ENCODE measurements at regions of chr17 and their contacts with region 1.

Region 1: DNA sequence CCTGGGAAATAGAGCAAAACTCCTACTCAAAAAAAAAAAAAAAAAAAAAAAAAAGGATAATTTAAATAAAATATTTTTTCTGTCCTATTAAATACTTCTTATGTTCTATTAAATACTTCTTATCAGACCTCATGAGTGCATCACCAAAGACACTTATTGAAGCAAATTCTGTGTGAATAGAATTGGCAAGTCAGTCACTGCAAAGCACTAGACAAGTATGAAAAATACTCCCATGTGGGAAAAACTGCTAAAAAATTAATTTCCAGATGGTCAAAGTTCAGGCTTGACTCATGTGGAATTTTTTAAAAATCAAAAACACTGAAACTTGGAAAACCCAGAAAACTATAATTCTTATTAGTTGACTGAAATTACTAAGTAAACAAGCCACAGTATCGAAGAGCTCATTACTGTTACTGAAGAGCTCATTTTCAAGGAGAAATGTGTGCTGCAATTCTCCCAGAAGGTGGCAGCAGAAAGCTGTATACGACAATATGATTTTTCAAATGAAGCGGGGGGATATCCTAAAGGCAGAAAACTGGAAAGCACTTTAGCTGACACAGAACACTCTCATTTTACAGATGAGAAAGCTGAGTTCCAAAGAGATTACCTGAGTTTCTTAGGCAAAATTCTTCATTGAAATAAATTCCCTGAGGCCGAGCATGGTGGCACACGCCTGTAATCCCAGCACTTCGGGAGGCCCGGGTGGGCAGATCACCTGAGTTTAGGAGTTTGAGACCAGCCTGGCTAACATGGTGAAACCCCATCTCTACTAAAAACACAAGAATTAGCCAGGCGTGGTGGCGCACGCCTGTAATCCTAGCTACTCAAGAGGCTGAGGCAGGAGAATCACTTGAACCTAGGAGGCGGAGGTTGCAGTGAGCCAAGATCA is 15.9 kb upstream of the FBXO47 start:
- DNase-seq: peak; percentile 75
- ATAC-seq: peak; percentile 60
- H3K4me3 ChIP-seq: no peak overlapping the region
- H3K27ac ChIP-seq: no peak overlapping the region
- H3K4me1 ChIP-seq: peaks cover 9% of the 10 kb centered on the region
- H3K27me3 ChIP-seq: no peaks in the 10 kb centered on the region
- CTCF ChIP-seq: peak; percentile 86
- POLR2A ChIP-seq: no peak
- RAD21 ChIP-seq: peak; percentile 85

Region 2: GRCh38 chr17:38351412-38352222 is 631.5 kb before region 1 on chr17 and contains the start of gene SOCS7:
- CTCF ChIA-PET with region 1: no interaction called
- POLR2A ChIA-PET with region 1: no interaction called
- dilution Hi-C with region 1: no loop called
- in situ Hi-C with region 1: no loop called
- intact Hi-C with region 1: no loop called
- DNase-seq: peak; percentile 90
- ATAC-seq: peak; percentile 89
- H3K4me3 ChIP-seq: peak within 1 kb of the TSS; percentile 80
- H3K27ac ChIP-seq: peak within 1 kb of the TSS; percentile 78
- H3K4me1 ChIP-seq: peaks cover 4% of the 10 kb centered on the region
- H3K27me3 ChIP-seq: no peaks in the 10 kb centered on the region
- CTCF ChIP-seq: no peak
- POLR2A ChIP-seq: peak; percentile 80
- RAD21 ChIP-seq: no peak
- total RNA-seq, gene SOCS7: 6.5 and 7.5 TPM in 2 replicates

Region 3: GRCh38 chr17:38557836-38558727 is 425.0 kb before region 1 on chr17:
- CTCF ChIA-PET with region 1: no interaction called
- POLR2A ChIA-PET with region 1: no interaction called
- dilution Hi-C with region 1: no loop called
- in situ Hi-C with region 1: no loop called
- intact Hi-C with region 1: no loop called
- DNase-seq: peak; percentile 86
- ATAC-seq: peak; percentile 97
- H3K4me3 ChIP-seq: peak overlapping the region; percentile 24
- H3K27ac ChIP-seq: no peak overlapping the region
- H3K4me1 ChIP-seq: peaks cover 2% of the 10 kb centered on the region; the same call in 1 of the 2 replicates
- H3K27me3 ChIP-seq: peaks cover 70% of the 10 kb centered on the region
- CTCF ChIP-seq: peak; percentile 93
- POLR2A ChIP-seq: no peak
- RAD21 ChIP-seq: peak; percentile 77

Region 4: DNA sequence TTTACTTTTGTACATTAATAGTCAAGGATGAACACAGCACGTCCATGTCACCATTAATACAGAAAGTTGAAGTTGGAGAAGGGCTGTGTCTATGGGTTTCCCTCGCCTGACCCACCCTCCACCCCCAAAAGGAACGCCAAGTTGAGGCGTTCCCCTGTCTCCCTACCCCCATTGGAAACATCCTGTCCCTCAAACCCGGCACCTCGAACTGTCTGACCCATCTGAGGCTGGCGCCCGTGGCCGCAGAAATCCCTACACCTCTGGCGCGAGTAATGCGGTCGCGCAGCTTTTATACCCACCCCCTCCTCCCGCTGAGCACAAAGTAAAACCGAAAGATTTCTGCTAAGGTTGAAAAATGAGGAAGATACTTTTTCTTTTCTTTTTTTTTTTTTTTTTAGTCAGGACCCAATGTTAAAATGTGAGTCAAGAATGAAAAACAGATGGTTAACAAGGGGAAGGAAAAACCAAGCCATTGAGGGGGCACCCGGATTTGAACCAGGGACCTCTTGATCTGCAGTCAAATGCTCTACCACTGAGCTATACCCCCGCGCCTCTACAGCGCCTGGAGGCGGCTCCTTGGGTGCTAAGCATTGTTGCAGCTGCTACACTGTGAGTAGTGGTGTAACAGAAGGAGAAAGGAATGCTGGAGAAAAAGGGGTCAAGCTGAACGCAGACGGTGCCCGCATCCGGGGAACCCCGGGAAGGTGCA is 114.1 kb before region 1 on chr17:
- CTCF ChIA-PET with region 1: interaction called, 3 read pairs
- POLR2A ChIA-PET with region 1: interaction called, 7 read pairs
- dilution Hi-C with region 1: no loop called
- in situ Hi-C with region 1: no loop called
- intact Hi-C with region 1: loop called (anchors 5 kb)
- DNase-seq: peak; percentile 88
- ATAC-seq: peak; percentile 27
- H3K4me3 ChIP-seq: peak overlapping the region; percentile 90
- H3K27ac ChIP-seq: peak overlapping the region; percentile 90
- H3K4me1 ChIP-seq: peaks cover 24% of the 10 kb centered on the region
- H3K27me3 ChIP-seq: no peaks in the 10 kb centered on the region
- CTCF ChIP-seq: peak; percentile 42
- POLR2A ChIP-seq: no peak; the same call in none of the 2 replicates
- RAD21 ChIP-seq: no peak

Region 5: DNA sequence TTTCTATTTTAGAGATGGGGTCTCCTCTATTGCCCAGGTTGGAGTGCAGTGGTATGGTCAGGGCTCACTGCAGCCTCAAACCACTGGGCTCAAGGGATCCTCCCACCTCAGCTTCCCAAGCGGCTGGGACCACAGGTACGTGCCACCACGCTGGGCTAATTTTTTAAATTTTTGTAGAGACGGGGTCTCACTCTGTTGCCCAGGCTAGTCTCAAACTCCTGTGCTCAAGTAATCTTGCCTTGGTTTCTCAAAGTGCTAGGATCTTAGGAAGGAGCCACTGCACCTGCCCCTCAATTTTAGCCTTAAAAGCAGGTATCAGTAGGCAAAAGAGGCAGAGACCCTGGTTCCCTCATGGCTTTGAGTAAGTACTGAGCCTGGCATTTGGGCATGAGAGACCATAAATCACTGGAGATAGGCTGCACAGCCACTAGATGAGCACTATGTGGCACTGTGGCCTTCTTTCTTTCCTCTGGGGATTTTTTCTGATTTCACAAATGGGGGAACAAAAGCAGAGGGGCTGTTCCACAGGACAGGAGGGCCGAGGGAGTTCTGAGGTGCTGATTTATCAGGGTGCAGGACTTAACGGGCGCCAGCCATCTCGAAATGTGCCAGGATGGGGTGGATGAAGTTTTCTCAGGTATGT is 86.1 kb after region 1 on chr17:
- CTCF ChIA-PET with region 1: interaction called, 4 read pairs
- POLR2A ChIA-PET with region 1: no interaction called
- dilution Hi-C with region 1: no loop called
- in situ Hi-C with region 1: no loop called
- intact Hi-C with region 1: loop called (anchors 5 kb)
- DNase-seq: peak; percentile 54
- ATAC-seq: peak; percentile 93
- H3K4me3 ChIP-seq: no peak overlapping the region
- H3K27ac ChIP-seq: no peak overlapping the region
- H3K4me1 ChIP-seq: peaks cover 6% of the 10 kb centered on the region
- H3K27me3 ChIP-seq: peaks cover 29% of the 10 kb centered on the region
- CTCF ChIP-seq: peak; percentile 82
- POLR2A ChIP-seq: no peak
- RAD21 ChIP-seq: peak; percentile 78

Region 6: DNA sequence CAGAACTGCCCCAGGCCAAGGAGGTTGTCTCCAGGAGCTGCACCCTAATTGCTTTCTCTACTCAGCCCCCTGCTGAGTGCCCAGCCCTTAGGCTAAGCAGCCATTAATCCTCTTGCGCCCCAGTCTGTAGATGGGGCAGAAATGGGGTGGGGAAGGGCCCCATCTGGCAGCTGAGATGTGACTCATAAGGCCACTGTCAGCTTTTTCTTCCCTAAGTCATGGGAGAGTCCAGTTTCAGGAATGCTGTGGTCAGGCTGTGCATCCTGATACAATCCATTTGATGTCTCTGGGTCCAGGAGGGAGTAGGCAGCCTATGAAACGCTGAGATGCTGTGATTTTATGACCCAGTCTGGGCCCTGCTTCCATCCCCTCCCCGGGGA is 156.0 kb after region 1 on chr17:
- CTCF ChIA-PET with region 1: no interaction called
- POLR2A ChIA-PET with region 1: no interaction called
- dilution Hi-C with region 1: no loop called
- in situ Hi-C with region 1: no loop called
- intact Hi-C with region 1: loop called (anchors 5 kb)
- DNase-seq: peak; percentile 92
- ATAC-seq: peak; percentile 97
- H3K4me3 ChIP-seq: no peak overlapping the region
- H3K27ac ChIP-seq: peak overlapping the region; percentile 19; the same call in 1 of the 2 replicates
- H3K4me1 ChIP-seq: peaks cover 17% of the 10 kb centered on the region
- H3K27me3 ChIP-seq: no peaks in the 10 kb centered on the region
- CTCF ChIP-seq: no peak
- POLR2A ChIP-seq: no peak
- RAD21 ChIP-seq: no peak

Region 7: GRCh38 chr17:39153599-39154051 is 170.5 kb after region 1 on chr17:
- CTCF ChIA-PET with region 1: interaction called, 53 read pairs
- POLR2A ChIA-PET with region 1: no interaction called
- dilution Hi-C with region 1: no loop called
- in situ Hi-C with region 1: loop called (anchors 5 kb)
- intact Hi-C with region 1: loop called (anchors 1 kb)
- DNase-seq: peak; percentile 88
- ATAC-seq: peak; percentile 69
- H3K4me3 ChIP-seq: peak overlapping the region; percentile 74
- H3K27ac ChIP-seq: peak overlapping the region; percentile 43; the same call in 1 of the 2 replicates
- H3K4me1 ChIP-seq: peaks cover 2% of the 10 kb centered on the region
- H3K27me3 ChIP-seq: peaks cover 20% of the 10 kb centered on the region
- CTCF ChIP-seq: peak; percentile 15; the same call in 1 of the 2 replicates
- POLR2A ChIP-seq: no peak
- RAD21 ChIP-seq: peak; percentile 28; the same call in 1 of the 2 replicates

Region 8: GRCh38 chr17:39174907-39175694 is 192.0 kb after region 1 on chr17:
- CTCF ChIA-PET with region 1: no interaction called
- POLR2A ChIA-PET with region 1: no interaction called
- dilution Hi-C with region 1: no loop called
- in situ Hi-C with region 1: no loop called
- intact Hi-C with region 1: loop called (anchors 1 kb)
- DNase-seq: peak; percentile 60
- ATAC-seq: peak; percentile 71
- H3K4me3 ChIP-seq: no peak overlapping the region
- H3K27ac ChIP-seq: no peak overlapping the region
- H3K4me1 ChIP-seq: no peaks in the 10 kb centered on the region
- H3K27me3 ChIP-seq: no peaks in the 10 kb centered on the region; the same call in 1 of the 2 replicates
- CTCF ChIP-seq: peak; percentile 69
- POLR2A ChIP-seq: no peak
- RAD21 ChIP-seq: peak; percentile 63

Region 9: DNA sequence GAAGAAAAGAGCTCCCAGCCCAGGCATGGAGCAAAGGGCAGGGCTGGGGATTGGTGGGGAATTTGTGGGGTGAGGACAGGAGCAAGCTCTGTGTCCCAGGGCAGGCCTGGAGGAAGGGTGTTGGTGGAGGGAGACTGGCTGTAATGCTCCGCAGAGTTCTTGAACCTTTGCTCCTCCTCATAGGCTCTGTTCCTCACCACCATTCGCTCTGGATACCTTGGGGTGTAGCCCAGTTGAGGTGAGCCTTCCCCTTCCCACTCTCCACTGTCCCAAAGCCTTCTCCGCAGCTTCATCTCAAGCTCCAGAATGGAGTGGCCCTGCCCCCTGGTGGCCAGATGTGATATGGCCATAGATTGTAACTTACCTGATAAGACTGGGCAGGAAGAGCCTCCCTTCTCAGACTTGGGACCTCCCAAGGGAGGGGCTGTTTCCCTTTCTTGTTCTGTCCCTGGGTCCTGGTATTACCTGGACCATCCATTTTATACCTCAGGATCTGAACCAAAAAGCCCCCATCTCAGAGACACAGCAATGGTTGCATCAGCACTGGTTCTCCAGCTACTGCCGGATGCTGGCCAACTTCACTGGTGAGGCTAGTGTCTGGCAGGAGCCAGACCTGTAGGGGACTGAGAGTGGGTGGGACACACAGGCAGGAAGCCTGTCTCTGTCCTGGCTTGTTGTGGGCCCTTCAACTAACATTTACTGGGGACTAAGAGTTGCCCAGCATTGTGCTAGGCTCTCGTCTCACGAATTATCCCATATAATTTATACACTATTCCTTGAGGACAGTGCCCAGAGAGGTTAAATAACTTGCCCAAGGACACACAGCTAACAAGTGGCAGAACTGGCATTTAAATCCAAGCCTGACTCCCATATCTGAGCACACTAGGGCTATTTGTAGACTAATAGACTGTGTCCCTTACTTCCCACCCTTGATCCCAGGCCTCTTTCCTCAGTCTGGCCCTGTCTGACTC is 261.8 kb after region 1 on chr17:
- CTCF ChIA-PET with region 1: interaction called, 6 read pairs
- POLR2A ChIA-PET with region 1: no interaction called
- dilution Hi-C with region 1: no loop called
- in situ Hi-C with region 1: loop called (anchors 10 kb)
- intact Hi-C with region 1: loop called (anchors 1 kb)
- DNase-seq: peak; percentile 76
- ATAC-seq: peak; percentile 96
- H3K4me3 ChIP-seq: no peak overlapping the region
- H3K27ac ChIP-seq: no peak overlapping the region
- H3K4me1 ChIP-seq: no peaks in the 10 kb centered on the region
- H3K27me3 ChIP-seq: no peaks in the 10 kb centered on the region
- CTCF ChIP-seq: peak; percentile 91
- POLR2A ChIP-seq: no peak
- RAD21 ChIP-seq: peak; percentile 87